CD4-positive, alpha-beta T cell (primary cell): ENCODE measurements at regions of chr5 and their contacts with region 1.

Region 1: DNA sequence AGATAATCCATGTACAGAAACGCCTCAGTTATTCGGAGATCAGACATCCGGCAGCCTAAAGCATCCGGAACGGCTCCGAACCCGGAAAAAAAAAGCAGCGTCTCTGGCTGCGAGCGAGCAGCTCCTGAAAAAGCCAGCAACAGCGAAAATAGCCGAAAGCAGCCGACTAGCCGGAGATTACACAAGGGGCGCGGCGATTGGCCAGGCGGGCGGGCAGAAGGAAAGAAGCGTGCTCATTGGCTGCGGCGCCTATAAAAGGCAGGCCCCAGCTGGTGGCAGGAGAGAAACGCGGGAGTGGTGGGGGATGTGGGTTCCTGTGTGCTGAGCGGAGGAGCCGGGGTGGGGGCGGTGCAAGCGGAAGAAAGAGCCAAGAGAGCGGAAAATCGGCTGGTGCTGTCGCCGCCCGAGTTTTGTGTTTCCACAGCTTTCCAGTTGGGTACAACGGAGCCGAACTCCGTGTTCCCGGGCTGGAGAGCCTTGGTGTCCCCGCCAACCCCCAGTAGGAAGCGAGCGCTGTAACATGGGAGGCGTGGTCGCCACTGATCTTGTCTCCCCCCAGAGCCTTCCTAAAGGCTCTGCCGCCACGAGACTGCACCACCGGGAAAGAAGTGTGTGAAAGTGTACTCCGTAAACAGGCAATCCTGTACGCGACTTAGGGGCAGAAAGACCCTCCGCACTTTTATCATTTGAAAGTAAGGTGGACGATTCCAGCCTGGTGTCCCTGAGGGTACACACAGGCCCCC is at the start of gene ARL15:
- DNase-seq: peak; percentile 97 to 99 (median 98)
- ATAC-seq: peak; percentile 93
- H3K4me3 ChIP-seq: peak within 1 kb of the TSS; percentile 86
- H3K4me3 Mint-ChIP-seq: peak within 1 kb of the TSS; percentile 99
- H3K27ac ChIP-seq: peak within 1 kb of the TSS; percentile 53 to 59
- H3K27ac Mint-ChIP-seq: peak within 1 kb of the TSS; percentile 94
- H3K4me1 ChIP-seq: peaks cover 11% of the 10 kb centered on the region
- H3K4me1 Mint-ChIP-seq: peaks cover 35% of the 10 kb centered on the region
- H3K27me3 ChIP-seq: no peaks in the 10 kb centered on the region
- H3K27me3 Mint-ChIP-seq: peaks cover 23% of the 10 kb centered on the region
- CTCF ChIP-seq: no peak
- total RNA-seq, gene ARL15: 9.1 to 10.6 TPM

Region 2: GRCh38 chr5:52799983-52800393 is 1510.6 kb before region 1 on chr5:
- CTCF ChIA-PET with region 1: no interaction called
- POLR2A ChIA-PET with region 1: no interaction called
- intact Hi-C with region 1: loop called in 1 of 2 experiments (anchors 10 kb)
- DNase-seq: peak; percentile 90 to 98 (median 94)
- ATAC-seq: peak; percentile 87
- H3K4me3 ChIP-seq: peak overlapping the region; percentile 93
- H3K4me3 Mint-ChIP-seq: peak overlapping the region; percentile 98
- H3K27ac ChIP-seq: peak overlapping the region; percentile 46 to 75
- H3K27ac Mint-ChIP-seq: peak overlapping the region; percentile 88
- H3K4me1 ChIP-seq: peaks cover 29% of the 10 kb centered on the region
- H3K4me1 Mint-ChIP-seq: peaks cover 69% of the 10 kb centered on the region
- H3K27me3 ChIP-seq: no peaks in the 10 kb centered on the region
- H3K27me3 Mint-ChIP-seq: no peaks in the 10 kb centered on the region
- CTCF ChIP-seq: no peak

Region 3: GRCh38 chr5:53560506-53561191 is 750.0 kb before region 1 on chr5 and contains the start of gene NDUFS4:
- CTCF ChIA-PET with region 1: no interaction called
- POLR2A ChIA-PET with region 1: no interaction called
- intact Hi-C with region 1: loop called in 1 of 2 experiments (anchors 10 kb)
- DNase-seq: peak; percentile 56 to 85 (median 72)
- ATAC-seq: peak; percentile 90
- H3K4me3 ChIP-seq: peak within 1 kb of the TSS; percentile 93
- H3K4me3 Mint-ChIP-seq: peak within 1 kb of the TSS; percentile 99
- H3K27ac ChIP-seq: peak within 1 kb of the TSS; percentile 51 to 58
- H3K27ac Mint-ChIP-seq: peak within 1 kb of the TSS; percentile 96
- H3K4me1 ChIP-seq: peaks cover 8% of the 10 kb centered on the region
- H3K4me1 Mint-ChIP-seq: peaks cover 56% of the 10 kb centered on the region
- H3K27me3 ChIP-seq: peaks cover 3 to 22% of the 10 kb centered on the region in 2 experiments
- H3K27me3 Mint-ChIP-seq: peaks cover 29% of the 10 kb centered on the region
- CTCF ChIP-seq: no peak
- total RNA-seq, gene NDUFS4: 25.0 to 25.1 TPM

Region 4: GRCh38 chr5:54421976-54422375 is 111.4 kb after region 1 on chr5:
- CTCF ChIA-PET with region 1: interaction called, 4 read pairs
- POLR2A ChIA-PET with region 1: interaction called, 4 read pairs
- intact Hi-C with region 1: loop called (anchors 1 to 2 kb)
- DNase-seq: no peak
- ATAC-seq: no peak
- H3K4me3 ChIP-seq: no peak overlapping the region
- H3K4me3 Mint-ChIP-seq: no peak overlapping the region
- H3K27ac ChIP-seq: no peak overlapping the region
- H3K27ac Mint-ChIP-seq: no peak overlapping the region
- H3K4me1 ChIP-seq: no peaks in the 10 kb centered on the region
- H3K4me1 Mint-ChIP-seq: no peaks in the 10 kb centered on the region
- H3K27me3 ChIP-seq: peaks cover 0 to 7% of the 10 kb centered on the region in 2 experiments
- H3K27me3 Mint-ChIP-seq: peaks cover 20% of the 10 kb centered on the region
- CTCF ChIP-seq: no peak

Region 5: DNA sequence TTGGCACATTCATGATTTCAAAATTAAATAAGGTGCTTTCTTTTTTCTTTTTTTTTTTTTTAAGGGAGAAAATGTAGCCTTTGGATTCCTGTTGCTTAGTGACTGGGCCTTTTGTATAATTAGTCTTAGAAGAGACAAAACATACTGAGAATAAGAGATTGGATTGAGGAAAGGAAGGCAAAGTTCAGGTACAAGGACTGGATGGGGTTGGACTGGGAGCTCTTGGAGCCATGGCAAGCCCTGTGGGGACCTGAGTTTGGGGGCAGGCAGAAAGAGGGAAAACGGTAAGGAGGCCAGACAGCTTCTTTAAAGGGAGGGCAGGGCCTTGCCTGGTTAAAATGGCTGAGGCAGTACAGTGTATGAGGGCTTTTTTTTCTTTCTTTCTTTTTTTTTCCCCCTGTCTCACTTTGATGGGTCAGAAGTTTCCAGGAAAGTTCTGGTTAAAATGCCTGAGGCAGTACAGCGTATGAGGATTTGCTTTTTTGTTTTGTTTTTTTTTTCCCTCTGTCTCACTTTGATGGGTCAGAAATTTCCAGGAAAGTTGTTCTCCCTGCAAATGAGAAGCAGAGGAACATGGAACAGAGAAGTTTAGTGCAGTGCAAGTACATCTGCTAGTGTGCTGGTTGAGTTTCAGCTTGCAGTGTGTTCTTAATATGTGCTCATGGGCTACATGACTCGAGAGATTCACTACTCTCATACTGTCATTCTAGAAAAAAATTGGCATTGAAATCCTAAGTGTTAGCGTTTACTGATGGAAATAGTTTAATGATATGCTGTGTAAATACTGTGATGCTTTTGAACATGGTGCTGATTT is 223.8 kb after region 1 on chr5:
- CTCF ChIA-PET with region 1: no interaction called
- POLR2A ChIA-PET with region 1: no interaction called
- intact Hi-C with region 1: no loop called
- DNase-seq: no peak
- ATAC-seq: no peak
- H3K4me3 ChIP-seq: no peak overlapping the region
- H3K4me3 Mint-ChIP-seq: no peak overlapping the region
- H3K27ac ChIP-seq: no peak overlapping the region
- H3K27ac Mint-ChIP-seq: no peak overlapping the region
- H3K4me1 ChIP-seq: peaks cover 14% of the 10 kb centered on the region
- H3K4me1 Mint-ChIP-seq: peaks cover 63% of the 10 kb centered on the region
- H3K27me3 ChIP-seq: no peaks in the 10 kb centered on the region
- H3K27me3 Mint-ChIP-seq: no peaks in the 10 kb centered on the region
- CTCF ChIP-seq: no peak

Region 6: GRCh38 chr5:54646356-54647101 is 335.9 kb after region 1 on chr5:
- CTCF ChIA-PET with region 1: no interaction called
- POLR2A ChIA-PET with region 1: interaction called, 7 read pairs
- intact Hi-C with region 1: loop called in 1 of 2 experiments (anchors 10 kb)
- DNase-seq: peak; percentile 18 to 85 (median 52)
- ATAC-seq: peak; percentile 85
- H3K4me3 ChIP-seq: peak overlapping the region; percentile 13
- H3K4me3 Mint-ChIP-seq: peak overlapping the region; percentile 80
- H3K27ac ChIP-seq: peak overlapping the region; percentile 56 to 70
- H3K27ac Mint-ChIP-seq: peak overlapping the region; percentile 97
- H3K4me1 ChIP-seq: peaks cover 43% of the 10 kb centered on the region
- H3K4me1 Mint-ChIP-seq: peaks cover 58% of the 10 kb centered on the region
- H3K27me3 ChIP-seq: no peaks in the 10 kb centered on the region
- H3K27me3 Mint-ChIP-seq: no peaks in the 10 kb centered on the region
- CTCF ChIP-seq: no peak

Region 7: DNA sequence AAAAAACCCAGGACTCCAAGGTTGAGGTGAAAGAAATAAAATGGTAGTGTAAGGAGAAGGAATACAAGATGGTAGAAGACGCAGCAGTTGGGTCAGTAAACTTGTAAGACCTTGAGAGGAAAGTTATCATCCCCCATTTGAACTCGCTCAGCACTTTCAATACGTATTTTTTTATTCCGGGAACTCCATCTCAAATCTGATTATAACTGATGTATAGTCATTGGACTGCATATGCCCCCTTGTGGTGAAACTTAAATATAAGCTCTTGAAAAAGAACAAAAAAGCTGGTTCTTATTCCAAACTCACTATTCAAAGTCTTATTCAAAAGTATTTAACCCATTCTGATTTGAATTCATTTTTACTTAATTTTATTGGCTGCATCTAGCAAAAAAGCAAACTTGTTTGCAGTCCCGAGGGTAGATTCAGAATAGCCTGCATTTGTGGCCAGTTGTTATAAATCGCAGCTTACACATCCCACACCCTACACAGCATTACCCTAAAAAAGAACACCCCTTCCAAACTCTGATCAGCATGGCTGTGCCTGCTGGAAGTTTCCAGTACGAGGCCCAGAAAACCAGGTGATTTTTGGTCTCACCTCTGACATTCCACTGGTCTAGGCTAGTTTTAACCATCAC is 556.8 kb after region 1 on chr5:
- CTCF ChIA-PET with region 1: interaction called, 3 read pairs
- POLR2A ChIA-PET with region 1: no interaction called
- intact Hi-C with region 1: loop called in 1 of 2 experiments (anchors 2 kb)
- DNase-seq: peak in 3 of 14 experiments; percentile 72 to 74 (median 73)
- ATAC-seq: peak; percentile 74
- H3K4me3 ChIP-seq: no peak overlapping the region
- H3K4me3 Mint-ChIP-seq: peak overlapping the region; percentile 6
- H3K27ac ChIP-seq: no peak overlapping the region
- H3K27ac Mint-ChIP-seq: no peak overlapping the region
- H3K4me1 ChIP-seq: peaks cover 4% of the 10 kb centered on the region
- H3K4me1 Mint-ChIP-seq: peaks cover 10% of the 10 kb centered on the region
- H3K27me3 ChIP-seq: no peaks in the 10 kb centered on the region
- H3K27me3 Mint-ChIP-seq: peaks cover 46% of the 10 kb centered on the region
- CTCF ChIP-seq: peak; percentile 86

Region 8: DNA sequence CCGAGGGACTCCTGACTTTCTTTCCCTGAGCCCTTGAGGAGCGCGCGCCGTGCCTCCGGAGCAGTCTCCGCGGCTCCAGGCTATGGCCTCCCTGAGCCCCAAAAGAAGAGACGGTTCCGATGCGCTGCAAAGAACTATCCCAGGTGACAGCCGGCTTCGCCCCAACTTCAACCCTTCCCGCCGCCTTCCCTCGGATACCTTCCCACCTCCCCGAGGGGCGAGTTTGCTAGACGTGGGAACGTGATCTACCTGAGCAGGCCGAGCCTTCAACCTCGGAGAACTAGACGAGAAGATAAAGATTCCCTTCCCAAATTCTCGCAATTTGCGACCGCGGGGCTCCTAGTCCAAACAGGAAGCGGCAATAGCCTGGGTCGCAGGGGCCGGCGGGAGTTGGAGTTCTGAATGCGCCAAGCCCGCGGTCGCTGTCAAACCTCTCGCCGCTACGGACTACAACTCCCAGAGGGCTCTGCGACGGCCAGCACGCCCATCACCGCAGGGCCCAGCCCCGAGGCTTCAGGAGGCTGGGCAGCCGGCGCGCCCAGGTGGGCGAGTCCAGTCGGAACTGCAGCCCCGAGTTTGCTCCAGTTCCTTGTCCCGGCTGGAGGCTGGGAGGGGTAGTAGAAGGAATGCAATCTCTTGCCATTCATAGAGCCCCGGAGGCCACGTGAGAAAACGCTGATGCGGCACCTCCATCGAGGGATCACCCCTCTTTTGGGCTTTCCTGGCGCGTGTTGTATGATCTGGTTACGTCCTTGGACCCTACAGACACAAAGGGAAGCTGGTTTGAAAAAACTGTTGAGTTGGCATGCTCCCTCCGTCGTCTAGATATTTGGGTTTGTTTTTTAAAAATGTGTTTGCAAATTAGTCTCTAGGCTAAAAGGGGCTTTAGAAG is 1401.6 kb after region 1 on chr5 and contains the start of gene SLC38A9:
- CTCF ChIA-PET with region 1: no interaction called
- POLR2A ChIA-PET with region 1: no interaction called
- intact Hi-C with region 1: loop called in 1 of 2 experiments (anchors 10 kb)
- DNase-seq: peak; percentile 83 to 95 (median 90)
- ATAC-seq: peak; percentile 99
- H3K4me3 ChIP-seq: peak within 1 kb of the TSS; percentile 90
- H3K4me3 Mint-ChIP-seq: peak within 1 kb of the TSS; percentile 99
- H3K27ac ChIP-seq: peak within 1 kb of the TSS in 1 of 2 donors; percentile 50
- H3K27ac Mint-ChIP-seq: peak within 1 kb of the TSS; percentile 82
- H3K4me1 ChIP-seq: peaks cover 20% of the 10 kb centered on the region
- H3K4me1 Mint-ChIP-seq: peaks cover 39% of the 10 kb centered on the region
- H3K27me3 ChIP-seq: no peaks in the 10 kb centered on the region
- H3K27me3 Mint-ChIP-seq: no peaks in the 10 kb centered on the region
- CTCF ChIP-seq: no peak
- total RNA-seq, gene SLC38A9: 10.0 to 10.3 TPM